Posterior vena cava (tissue), 2 donors: ENCODE measurements at regions of chr6 and their contacts with region 1.

Region 1: DNA sequence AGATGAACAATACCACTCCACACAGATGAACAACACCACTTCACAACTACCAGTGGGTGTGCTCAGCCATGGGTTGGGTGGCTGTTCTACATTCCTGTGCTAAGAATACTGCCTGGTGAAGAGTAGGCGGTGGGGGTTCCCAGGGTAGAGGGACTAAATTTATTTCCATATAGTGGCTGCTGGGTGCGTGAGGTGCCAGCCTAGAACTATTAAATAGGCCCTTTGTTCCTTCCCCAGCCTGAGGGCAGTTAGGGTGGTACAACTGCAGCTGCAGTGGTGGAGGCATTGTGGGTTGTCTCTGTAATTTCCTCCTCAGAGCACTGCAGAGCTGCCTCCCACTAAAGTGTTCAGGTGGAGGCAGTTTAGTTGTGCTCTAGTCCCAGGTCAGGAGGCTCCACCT is 618.4 kb downstream of the MMUT start:
- DNase-seq: no peak

Region 2: DNA sequence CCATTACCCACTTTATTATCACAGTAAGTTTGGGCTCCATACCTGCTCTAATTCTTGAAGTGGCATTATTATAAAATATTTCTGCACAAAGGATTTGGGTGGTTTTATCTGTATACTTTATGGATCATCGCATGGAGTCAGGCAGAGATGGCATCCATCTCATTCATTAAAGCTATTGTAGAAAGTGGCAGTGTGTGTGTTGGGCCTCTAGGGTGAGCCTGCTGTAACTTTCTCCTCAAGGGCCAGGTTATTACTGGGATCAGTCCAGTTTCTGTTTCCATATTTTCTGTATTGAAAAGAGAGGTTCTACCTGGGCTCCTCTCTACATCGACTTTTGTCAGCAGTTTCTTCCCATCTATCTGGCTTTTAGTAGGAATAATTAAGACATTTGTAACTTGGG is 107.2 kb after region 1 on chr6:
- intact Hi-C with region 1: loop called in 1 of 2 experiments (anchors 10 kb)
- DNase-seq: no peak